ENCODE measurements at regions of chr1 and their contacts with region 1.

Region 1: GRCh38 chr1:158972841-158973240 is 36.9 kb upstream of the IFI16 start:
- DNase-seq: peak; percentile 37
- H3K4me3 Mint-ChIP-seq: no peak overlapping the region
- H3K27ac Mint-ChIP-seq: no peak overlapping the region
- H3K4me1 Mint-ChIP-seq: peaks cover 43% of the 10 kb centered on the region
- H3K27me3 Mint-ChIP-seq: no peaks in the 10 kb centered on the region

Region 2: GRCh38 chr1:158793604-158794003 is 179.2 kb before region 1 on chr1:
- CTCF ChIA-PET with region 1: interaction called, 5 read pairs
- POLR2A ChIA-PET with region 1: no interaction called
- intact Hi-C with region 1: loop called (anchors 2 kb)
- DNase-seq: peak; percentile 56
- H3K4me3 Mint-ChIP-seq: no peak overlapping the region
- H3K27ac Mint-ChIP-seq: no peak overlapping the region
- H3K4me1 Mint-ChIP-seq: no peaks in the 10 kb centered on the region
- H3K27me3 Mint-ChIP-seq: peaks cover under 1% of the 10 kb centered on the region

Region 3: DNA sequence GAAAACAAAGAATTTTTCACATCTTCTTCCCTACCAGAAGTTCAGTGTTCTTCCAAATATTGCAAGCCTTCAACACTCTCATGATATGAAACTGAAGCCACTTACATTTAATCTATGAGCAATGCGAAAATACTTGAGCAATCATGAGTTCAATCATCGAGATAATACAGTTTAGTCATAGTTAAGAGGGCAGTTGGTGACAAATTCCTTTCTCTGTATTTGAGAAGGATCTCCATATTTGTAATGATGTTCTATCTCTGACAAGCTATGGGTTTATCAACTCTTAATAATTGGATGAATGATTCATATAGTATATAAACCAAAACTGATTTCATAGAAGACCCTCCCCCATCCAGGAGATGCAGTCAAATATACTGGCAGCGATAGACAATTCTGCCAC is 71.2 kb before region 1 on chr1:
- CTCF ChIA-PET with region 1: no interaction called
- POLR2A ChIA-PET with region 1: no interaction called
- intact Hi-C with region 1: loop called (anchors 1 kb)
- DNase-seq: no peak
- H3K4me3 Mint-ChIP-seq: no peak overlapping the region
- H3K27ac Mint-ChIP-seq: no peak overlapping the region
- H3K4me1 Mint-ChIP-seq: peaks cover 12% of the 10 kb centered on the region
- H3K27me3 Mint-ChIP-seq: peaks cover 7% of the 10 kb centered on the region

Region 4: DNA sequence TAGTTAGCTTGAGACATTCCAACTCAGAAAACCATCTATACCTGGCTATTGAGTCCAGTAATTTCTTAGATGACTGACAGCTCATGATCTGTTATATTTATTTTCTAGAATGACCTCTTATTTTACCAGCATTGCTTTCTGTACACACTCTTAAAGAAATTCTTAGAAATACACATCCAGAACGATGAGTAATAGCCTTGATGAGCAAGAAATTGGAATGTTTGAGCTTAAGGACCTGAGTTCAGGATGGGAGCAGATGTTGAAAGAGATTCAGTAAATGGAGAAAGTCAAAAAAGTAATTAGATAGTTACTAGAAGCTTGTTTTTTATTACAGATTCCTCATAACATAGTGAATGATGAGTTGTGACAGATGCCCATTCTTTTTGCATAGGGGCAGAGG is 29.8 kb before region 1 on chr1:
- CTCF ChIA-PET with region 1: no interaction called
- POLR2A ChIA-PET with region 1: no interaction called
- intact Hi-C with region 1: loop called (anchors 2 kb)
- DNase-seq: no peak
- H3K4me3 Mint-ChIP-seq: no peak overlapping the region
- H3K27ac Mint-ChIP-seq: no peak overlapping the region
- H3K4me1 Mint-ChIP-seq: peaks cover 39% of the 10 kb centered on the region
- H3K27me3 Mint-ChIP-seq: no peaks in the 10 kb centered on the region

Region 5: GRCh38 chr1:158983225-158983624 is 10.4 kb after region 1 on chr1:
- CTCF ChIA-PET with region 1: no interaction called
- POLR2A ChIA-PET with region 1: no interaction called
- intact Hi-C with region 1: no loop called
- DNase-seq: no peak
- H3K4me3 Mint-ChIP-seq: no peak overlapping the region
- H3K27ac Mint-ChIP-seq: no peak overlapping the region
- H3K4me1 Mint-ChIP-seq: peaks cover 4% of the 10 kb centered on the region
- H3K27me3 Mint-ChIP-seq: no peaks in the 10 kb centered on the region

Region 6: GRCh38 chr1:159040206-159040605 is 67.4 kb after region 1 on chr1:
- CTCF ChIA-PET with region 1: no interaction called
- POLR2A ChIA-PET with region 1: no interaction called
- intact Hi-C with region 1: no loop called
- DNase-seq: no peak
- H3K4me3 Mint-ChIP-seq: no peak overlapping the region
- H3K27ac Mint-ChIP-seq: no peak overlapping the region
- H3K4me1 Mint-ChIP-seq: peaks cover 61% of the 10 kb centered on the region
- H3K27me3 Mint-ChIP-seq: no peaks in the 10 kb centered on the region

Region 7: GRCh38 chr1:159077120-159077961 is 104.5 kb after region 1 on chr1:
- CTCF ChIA-PET with region 1: interaction called, 4 read pairs
- POLR2A ChIA-PET with region 1: interaction called, 4 read pairs
- intact Hi-C with region 1: loop called (anchors 1 kb)
- DNase-seq: peak; percentile 100
- H3K4me3 Mint-ChIP-seq: peak overlapping the region; percentile 95
- H3K27ac Mint-ChIP-seq: peak overlapping the region; percentile 97
- H3K4me1 Mint-ChIP-seq: peaks cover 52% of the 10 kb centered on the region
- H3K27me3 Mint-ChIP-seq: no peaks in the 10 kb centered on the region

Region 8: GRCh38 chr1:159763686-159764085 is 790.8 kb after region 1 on chr1:
- CTCF ChIA-PET with region 1: no interaction called
- POLR2A ChIA-PET with region 1: no interaction called
- intact Hi-C with region 1: no loop called
- DNase-seq: no peak
- H3K4me3 Mint-ChIP-seq: no peak overlapping the region
- H3K27ac Mint-ChIP-seq: no peak overlapping the region
- H3K4me1 Mint-ChIP-seq: no peaks in the 10 kb centered on the region
- H3K27me3 Mint-ChIP-seq: peaks cover 5% of the 10 kb centered on the region

Measured in activated CD4-positive, alpha-beta memory T cell treated with anti-CD3 and anti-CD28 coated beads for 36 hours (primary cell).